ENCODE measurements at regions of chr10 and their contacts with region 1.

Region 1: DNA sequence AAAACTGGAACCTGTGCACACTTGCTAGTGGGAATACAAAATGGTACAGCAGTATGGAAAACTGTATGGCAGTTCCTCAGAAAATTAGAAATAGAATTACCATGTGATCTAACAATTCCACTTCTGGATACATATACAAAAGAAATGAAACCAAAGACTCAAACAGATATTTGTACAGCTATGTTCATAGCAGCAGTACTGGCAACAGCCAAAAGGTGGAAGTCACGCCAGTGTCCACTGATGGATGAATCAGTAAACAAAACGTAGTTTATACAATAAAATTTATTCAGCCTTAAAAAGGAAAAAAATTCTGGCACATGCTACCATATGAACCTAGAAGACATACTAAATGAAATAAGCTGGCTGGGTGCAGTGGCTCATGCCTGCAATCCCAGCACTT is 23.0 kb downstream of the IDE start:
- DNase-seq: no peak
- ATAC-seq: no peak
- H3K4me3 ChIP-seq: no peak overlapping the region
- H3K27ac ChIP-seq: no peak overlapping the region
- H3K4me1 ChIP-seq: no peaks in the 10 kb centered on the region
- H3K27me3 ChIP-seq: no peaks in the 10 kb centered on the region
- CTCF ChIP-seq: no peak
- POLR2A ChIP-seq: no peak

Region 2: GRCh38 chr10:92523639-92524038 is 27.3 kb before region 1 on chr10:
- in situ Hi-C with region 1: no loop called
- intact Hi-C with region 1: loop called (anchors 2 kb)
- DNase-seq: no peak
- ATAC-seq: no peak
- H3K4me3 ChIP-seq: no peak overlapping the region
- H3K27ac ChIP-seq: no peak overlapping the region
- H3K4me1 ChIP-seq: no peaks in the 10 kb centered on the region
- H3K27me3 ChIP-seq: no peaks in the 10 kb centered on the region
- CTCF ChIP-seq: no peak
- POLR2A ChIP-seq: no peak

Measured in gastrocnemius medialis (tissue), 4 donors.